CD4-positive, alpha-beta memory T cell (primary cell): ENCODE measurements at regions of chr20 and their contacts with region 1.

Region 1: GRCh38 chr20:32484958-32485769 is 100.0 kb downstream of the NOL4L start:
- DNase-seq: peak; percentile 84 to 91 (median 86)
- H3K4me3 ChIP-seq: peak overlapping the region; percentile 2 to 64
- H3K4me3 Mint-ChIP-seq: peak overlapping the region; percentile 90 to 98 (median 94)
- H3K27ac ChIP-seq: peak overlapping the region; percentile 58
- H3K27ac Mint-ChIP-seq: peak overlapping the region; percentile 92 to 98 (median 96)
- H3K4me1 ChIP-seq: peaks cover 45% of the 10 kb centered on the region
- H3K4me1 Mint-ChIP-seq: peaks cover 30 to 50% (median 35%) of the 10 kb centered on the region in 4 donors
- H3K27me3 ChIP-seq: no peaks in the 10 kb centered on the region
- H3K27me3 Mint-ChIP-seq: peaks cover 0 to 1% of the 10 kb centered on the region in 2 donors

Region 2: DNA sequence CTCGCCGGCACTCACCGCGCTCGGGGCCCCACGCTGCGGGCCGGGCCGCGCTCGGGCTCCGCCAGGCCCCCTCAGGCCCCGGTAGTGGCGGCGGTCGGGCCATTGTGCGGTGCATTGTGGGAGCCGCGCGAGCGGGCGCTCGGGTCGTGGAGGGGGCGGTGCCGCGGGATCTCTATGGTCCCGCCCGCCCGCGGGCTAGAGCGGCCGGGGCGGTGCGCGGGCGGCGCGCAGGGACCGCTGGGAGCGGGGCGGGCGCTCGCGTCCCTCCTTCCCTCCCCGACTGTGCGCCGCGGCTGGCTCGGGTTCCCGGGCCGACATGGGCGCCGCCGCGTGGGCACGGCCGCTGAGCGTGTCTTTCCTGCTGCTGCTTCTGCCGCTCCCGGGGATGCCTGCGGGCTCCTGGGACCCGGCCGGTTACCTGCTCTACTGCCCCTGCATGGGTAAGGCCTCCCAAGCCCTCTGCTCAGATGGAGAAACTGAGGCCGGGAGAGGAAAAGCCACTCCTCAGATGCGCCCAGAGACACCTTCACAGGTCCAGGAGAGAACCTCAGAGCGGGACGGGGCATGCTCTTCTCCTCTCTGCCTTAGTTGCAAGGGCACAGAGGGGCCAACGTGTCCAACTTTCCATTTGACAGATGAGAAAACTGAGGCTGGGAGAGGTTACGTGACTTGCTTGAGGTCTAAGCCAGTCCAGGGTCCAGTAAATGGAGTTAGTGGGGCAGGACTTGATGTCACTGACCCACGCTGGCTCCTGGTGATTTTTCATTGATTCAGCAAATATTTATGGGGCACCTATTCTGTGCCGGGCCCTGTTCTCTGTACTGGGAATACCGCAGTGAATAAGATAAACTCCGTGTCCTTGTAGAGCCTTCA is 277.3 kb before region 1 on chr20 and contains the starts of genes PLAGL2 and POFUT1:
- CTCF ChIA-PET with region 1: no interaction called
- POLR2A ChIA-PET with region 1: no interaction called
- intact Hi-C with region 1: loop called (anchors 5 kb)
- DNase-seq: peak; percentile 84 to 91 (median 89)
- H3K4me3 ChIP-seq: peak within 1 kb of the TSS; percentile 62 to 94
- H3K4me3 Mint-ChIP-seq: peak within 1 kb of the TSS; percentile 90 to 97 (median 95)
- H3K27ac ChIP-seq: peak within 1 kb of the TSS; percentile 87
- H3K27ac Mint-ChIP-seq: peak within 1 kb of the TSS; percentile 90 to 99 (median 97)
- H3K4me1 ChIP-seq: peaks cover 70% of the 10 kb centered on the region
- H3K4me1 Mint-ChIP-seq: peaks cover 62 to 76% (median 72%) of the 10 kb centered on the region in 4 donors
- H3K27me3 ChIP-seq: no peaks in the 10 kb centered on the region
- H3K27me3 Mint-ChIP-seq: no peaks in the 10 kb centered on the region
- total RNA-seq, gene PLAGL2: 18.7 to 20.7 TPM
- total RNA-seq, gene POFUT1: 19.7 to 20.8 TPM

Region 3: DNA sequence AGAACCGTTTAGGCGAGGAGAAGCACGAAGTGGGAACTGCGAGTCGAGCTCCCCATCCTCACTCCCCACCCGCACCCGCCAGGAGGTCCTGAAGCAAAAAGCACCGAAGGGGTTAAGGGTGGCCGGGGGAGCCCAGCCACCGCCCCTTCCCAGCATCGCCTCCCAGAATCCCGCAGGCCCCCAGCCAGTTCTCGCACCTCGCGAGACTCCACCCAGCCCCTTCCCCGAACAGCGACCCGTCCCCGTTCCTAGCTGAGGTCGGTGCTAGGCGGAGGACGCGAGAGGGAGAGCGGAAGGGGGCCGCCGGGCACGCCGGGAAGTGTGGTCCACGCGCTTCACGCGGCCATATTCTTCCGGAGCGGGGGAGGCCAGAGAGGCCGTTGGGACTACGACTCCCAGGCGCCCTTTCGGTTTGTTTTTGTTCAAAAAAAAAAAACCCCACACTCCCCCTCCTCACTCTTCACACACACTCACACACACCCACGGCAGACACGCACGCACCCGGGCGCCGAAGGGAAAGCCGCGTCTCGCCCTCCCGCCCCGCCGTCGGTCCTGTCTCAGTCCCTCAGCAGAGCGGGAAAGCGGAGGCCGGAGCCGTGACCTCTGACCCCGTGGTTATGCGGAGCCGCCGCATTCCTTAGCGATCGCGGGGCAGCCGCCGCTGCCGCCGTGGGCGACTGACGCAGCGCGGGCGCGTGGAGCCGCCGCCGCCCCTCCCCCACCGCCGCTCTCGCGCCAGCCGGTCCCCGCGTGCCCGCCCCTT is 127.1 kb before region 1 on chr20 and contains the start of gene ASXL1:
- CTCF ChIA-PET with region 1: interaction called, 4 read pairs
- POLR2A ChIA-PET with region 1: interaction called, 12 read pairs
- intact Hi-C with region 1: loop called (anchors 1 kb)
- DNase-seq: peak; percentile 92 to 95 (median 94)
- H3K4me3 ChIP-seq: peak within 1 kb of the TSS; percentile 77 to 85
- H3K4me3 Mint-ChIP-seq: peak within 1 kb of the TSS; percentile 91 to 98 (median 97)
- H3K27ac ChIP-seq: peak within 1 kb of the TSS; percentile 92
- H3K27ac Mint-ChIP-seq: peak within 1 kb of the TSS; percentile 98 to 99 (median 99)
- H3K4me1 ChIP-seq: peaks cover 42% of the 10 kb centered on the region
- H3K4me1 Mint-ChIP-seq: peaks cover 27 to 53% (median 39%) of the 10 kb centered on the region in 4 donors
- H3K27me3 ChIP-seq: no peaks in the 10 kb centered on the region
- H3K27me3 Mint-ChIP-seq: no peaks in the 10 kb centered on the region
- total RNA-seq, gene ASXL1: 126 to 127 TPM

Region 4: DNA sequence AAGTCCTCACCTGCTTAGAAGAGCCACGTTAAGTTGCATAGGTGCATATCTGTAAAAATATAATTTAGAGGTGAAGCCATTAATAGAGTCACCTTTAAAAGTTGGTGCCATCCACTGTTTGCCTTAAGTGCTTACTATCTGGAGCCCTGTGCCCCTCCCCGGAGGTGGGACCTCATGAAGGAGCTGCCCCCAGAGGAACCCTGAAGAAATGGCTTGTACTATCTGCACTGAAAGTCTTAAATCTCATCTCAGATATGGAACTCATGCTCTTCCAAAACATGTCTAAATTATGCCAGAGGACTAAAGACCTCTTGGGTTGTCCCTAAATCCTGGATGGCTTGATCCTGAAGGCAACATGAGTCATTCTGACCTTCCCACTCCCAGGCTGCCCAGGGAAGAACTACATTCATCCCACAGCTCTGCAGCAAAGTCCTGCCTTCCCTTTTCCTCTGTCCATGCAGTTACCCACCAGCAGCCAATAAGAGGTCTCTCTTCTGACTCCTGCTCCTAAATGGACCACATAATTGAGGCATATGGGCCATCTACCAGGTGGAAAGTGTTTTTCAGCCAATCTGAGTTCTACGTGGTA is 41.7 kb before region 1 on chr20:
- CTCF ChIA-PET with region 1: no interaction called
- POLR2A ChIA-PET with region 1: no interaction called
- intact Hi-C with region 1: loop called (anchors 5 kb)
- DNase-seq: no peak
- H3K4me3 ChIP-seq: no peak overlapping the region
- H3K4me3 Mint-ChIP-seq: no peak overlapping the region
- H3K27ac ChIP-seq: no peak overlapping the region
- H3K27ac Mint-ChIP-seq: peak overlapping the region; percentile 6 to 71 (median 48)
- H3K4me1 ChIP-seq: no peaks in the 10 kb centered on the region
- H3K4me1 Mint-ChIP-seq: peaks cover 7 to 28% (median 13%) of the 10 kb centered on the region in 4 donors
- H3K27me3 ChIP-seq: no peaks in the 10 kb centered on the region
- H3K27me3 Mint-ChIP-seq: no peaks in the 10 kb centered on the region

Region 5: GRCh38 chr20:32497589-32498224 is 12.5 kb after region 1 on chr20:
- CTCF ChIA-PET with region 1: interaction called, 3 read pairs
- POLR2A ChIA-PET with region 1: interaction called, 15 read pairs
- intact Hi-C with region 1: no loop called
- DNase-seq: no peak
- H3K4me3 ChIP-seq: no peak overlapping the region
- H3K4me3 Mint-ChIP-seq: no peak overlapping the region
- H3K27ac ChIP-seq: peak overlapping the region; percentile 0
- H3K27ac Mint-ChIP-seq: peak overlapping the region in 4 of 7 donors; percentile 12 to 81 (median 42)
- H3K4me1 ChIP-seq: peaks cover 6% of the 10 kb centered on the region
- H3K4me1 Mint-ChIP-seq: peaks cover 21 to 47% (median 30%) of the 10 kb centered on the region in 4 donors
- H3K27me3 ChIP-seq: no peaks in the 10 kb centered on the region
- H3K27me3 Mint-ChIP-seq: no peaks in the 10 kb centered on the region

Region 6: DNA sequence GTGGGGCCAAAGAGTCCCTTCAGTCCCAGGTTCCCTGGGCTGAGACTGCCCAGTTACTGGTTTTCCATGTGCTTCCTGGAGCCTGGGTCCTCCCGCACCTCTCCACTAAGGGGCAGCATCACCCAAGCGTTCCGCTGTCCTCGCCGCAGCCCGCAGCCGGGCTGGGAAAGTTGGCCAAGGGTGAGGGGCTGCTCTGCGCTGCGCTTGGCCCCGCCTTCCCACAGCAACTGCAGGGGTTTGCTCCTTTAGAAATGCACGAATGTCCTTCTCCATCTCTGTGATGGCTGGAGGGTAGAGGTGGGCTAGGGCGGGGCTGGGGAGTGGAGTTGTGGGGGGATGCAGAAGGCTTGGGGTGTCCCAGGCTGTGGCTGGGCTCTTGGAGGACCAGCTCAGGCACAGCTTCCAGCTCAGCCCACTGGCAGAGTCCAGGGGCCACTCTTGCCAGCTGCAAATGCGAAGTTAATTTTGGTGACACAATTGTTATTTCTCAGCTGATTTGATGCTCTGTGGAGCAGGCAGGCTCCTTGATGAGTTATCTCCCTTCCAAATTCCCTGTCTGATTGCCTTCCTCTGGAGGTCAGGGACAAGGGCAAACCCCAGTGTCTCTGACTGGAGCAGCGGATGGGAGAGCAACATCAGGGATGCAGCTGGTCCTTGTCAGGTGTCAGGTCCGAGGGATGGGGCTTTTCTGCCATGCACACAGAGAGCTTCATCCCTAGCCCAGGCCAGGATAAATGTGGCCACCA is 36.8 kb after region 1 on chr20:
- CTCF ChIA-PET with region 1: interaction called, 4 read pairs
- POLR2A ChIA-PET with region 1: interaction called, 12 read pairs
- intact Hi-C with region 1: no loop called
- DNase-seq: peak; percentile 62 to 72 (median 70)
- H3K4me3 ChIP-seq: no peak overlapping the region
- H3K4me3 Mint-ChIP-seq: peak overlapping the region in 6 of 8 donors; percentile 21 to 76 (median 56)
- H3K27ac ChIP-seq: peak overlapping the region; percentile 38
- H3K27ac Mint-ChIP-seq: peak overlapping the region; percentile 68 to 90 (median 88)
- H3K4me1 ChIP-seq: peaks cover 59% of the 10 kb centered on the region
- H3K4me1 Mint-ChIP-seq: peaks cover 37 to 66% (median 56%) of the 10 kb centered on the region in 4 donors
- H3K27me3 ChIP-seq: no peaks in the 10 kb centered on the region
- H3K27me3 Mint-ChIP-seq: no peaks in the 10 kb centered on the region